ENCODE measurements at regions of chr1 and their contacts with region 1.

Region 1: DNA sequence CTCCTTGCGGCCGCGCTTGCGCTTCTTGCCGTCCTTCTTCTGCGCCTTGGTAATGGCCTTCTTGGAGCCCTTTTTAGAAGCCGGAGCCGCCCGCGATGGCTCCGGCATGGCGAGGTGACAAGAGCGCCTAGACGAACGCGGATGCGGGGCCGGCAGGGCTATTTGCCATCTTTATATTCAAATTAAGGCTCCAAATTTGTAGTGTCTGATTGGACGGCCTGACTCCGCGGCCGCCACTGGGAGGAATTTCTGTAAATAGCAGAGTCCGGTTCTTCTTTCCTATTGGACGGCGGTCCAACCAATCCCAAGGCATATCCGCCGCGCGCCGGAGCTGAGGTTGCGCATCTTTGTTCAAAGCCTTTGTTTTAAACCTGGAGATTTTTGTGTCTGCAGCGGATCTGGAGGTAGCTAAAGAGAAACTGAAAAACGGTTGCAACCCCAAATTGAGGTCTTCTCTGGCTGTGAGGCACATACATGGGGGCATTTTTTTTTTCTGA is 22.6 kb upstream of the RNF187 start:
- DNase-seq: peak; percentile 87
- ATAC-seq: peak; percentile 81
- H3K4me3 Mint-ChIP-seq: peak overlapping the region; percentile 82
- H3K27ac Mint-ChIP-seq: peak overlapping the region; percentile 88
- H3K4me1 Mint-ChIP-seq: peaks cover 58% of the 10 kb centered on the region
- H3K27me3 Mint-ChIP-seq: peaks cover 17% of the 10 kb centered on the region

Region 2: DNA sequence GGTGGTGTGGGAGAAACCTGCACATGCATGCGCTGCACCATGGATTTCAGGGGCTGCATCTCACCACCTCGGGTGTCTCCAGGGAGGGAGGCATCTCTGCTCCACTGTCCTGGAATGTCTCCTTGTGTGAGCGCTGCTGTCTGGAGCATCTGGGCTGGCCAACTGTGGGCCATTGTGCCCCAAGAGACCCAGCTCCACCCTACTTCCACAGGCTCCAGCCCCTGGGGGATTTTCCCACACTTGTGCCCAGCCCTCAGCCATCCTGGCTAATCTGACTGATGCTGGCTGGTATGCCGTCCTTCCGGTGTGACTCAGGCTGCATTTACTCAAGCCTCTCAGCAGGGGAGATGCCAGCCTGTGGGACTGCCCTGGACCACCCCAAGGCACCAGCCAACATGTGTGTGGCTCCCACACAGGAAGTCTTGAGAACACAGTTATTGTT is 119.9 kb before region 1 on chr1:
- POLR2A ChIA-PET with region 1: no interaction called
- DNase-seq: peak; percentile 29
- ATAC-seq: no peak
- H3K4me3 Mint-ChIP-seq: no peak overlapping the region
- H3K27ac Mint-ChIP-seq: no peak overlapping the region
- H3K4me1 Mint-ChIP-seq: peaks cover 6% of the 10 kb centered on the region
- H3K27me3 Mint-ChIP-seq: no peaks in the 10 kb centered on the region

Region 3: GRCh38 chr1:228500901-228501871 is 36.7 kb after region 1 on chr1:
- POLR2A ChIA-PET with region 1: interaction called, 27 read pairs
- DNase-seq: peak; percentile 86
- ATAC-seq: peak; percentile 96
- H3K4me3 Mint-ChIP-seq: peak overlapping the region; percentile 76
- H3K27ac Mint-ChIP-seq: peak overlapping the region; percentile 68
- H3K4me1 Mint-ChIP-seq: peaks cover 32% of the 10 kb centered on the region
- H3K27me3 Mint-ChIP-seq: peaks cover 2% of the 10 kb centered on the region